Mammary epithelial cell (primary cell): ENCODE measurements at regions of chr5 and their contacts with region 1.

Region 1: GRCh38 chr5:138372225-138372624 is 19.7 kb downstream of the KDM3B start:
- DNase-seq: no peak
- H3K4me3 ChIP-seq: no peak overlapping the region
- H3K27ac ChIP-seq: no peak overlapping the region
- H3K4me1 ChIP-seq: no peaks in the 10 kb centered on the region
- H3K27me3 ChIP-seq: no peaks in the 10 kb centered on the region
- CTCF ChIP-seq: no peak

Region 2: GRCh38 chr5:138425079-138425478 is 52.9 kb after region 1 on chr5:
- CTCF ChIA-PET with region 1: no interaction called
- dilution Hi-C with region 1: loop called (anchors 5 kb)
- in situ Hi-C with region 1: no loop called
- intact Hi-C with region 1: no loop called
- DNase-seq: no peak
- H3K4me3 ChIP-seq: no peak overlapping the region
- H3K27ac ChIP-seq: no peak overlapping the region
- H3K4me1 ChIP-seq: no peaks in the 10 kb centered on the region
- H3K27me3 ChIP-seq: no peaks in the 10 kb centered on the region
- CTCF ChIP-seq: no peak